ENCODE measurements at regions of chr7 and their contacts with region 1.

Region 1: DNA sequence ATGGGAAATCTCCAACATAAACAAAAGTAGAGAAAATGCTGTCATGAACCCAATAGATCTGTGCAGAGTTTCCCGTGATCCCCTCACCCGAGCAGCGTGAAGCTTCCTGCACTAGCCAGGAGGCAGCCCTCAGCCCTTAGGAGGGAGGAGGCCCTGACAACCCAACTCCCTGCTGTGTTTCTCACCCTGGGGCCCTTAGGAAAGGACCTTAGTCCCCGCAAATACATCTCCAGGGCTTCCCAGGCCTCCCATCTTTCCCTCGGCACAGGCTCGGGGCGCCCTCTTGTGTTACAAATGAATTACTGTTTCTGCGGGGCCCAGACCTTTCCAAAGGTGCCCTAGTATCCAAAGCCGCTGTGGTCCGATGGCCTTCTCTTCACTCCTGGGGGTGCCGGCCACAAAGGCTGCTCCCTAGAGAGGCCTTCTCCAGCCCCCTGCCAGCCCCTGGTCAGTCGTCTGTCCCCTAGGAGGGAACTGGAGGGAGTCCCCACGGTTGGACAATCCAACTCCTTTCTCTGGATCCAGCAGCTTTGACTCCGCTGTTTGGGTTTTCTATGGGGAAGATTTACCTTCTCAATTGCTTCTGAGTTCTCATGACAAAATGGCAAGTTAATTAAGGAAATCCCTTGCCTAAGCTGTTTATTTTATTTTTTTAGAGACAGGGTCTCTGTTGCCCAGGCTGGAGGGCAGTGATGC is 49.9 kb upstream of the SH2B2 start:
- DNase-seq: peak; percentile 42 to 63 (median 60)
- H3K4me3 ChIP-seq: no peak overlapping the region
- H3K27ac ChIP-seq: no peak overlapping the region
- H3K4me1 ChIP-seq: no peaks in the 10 kb centered on the region
- H3K27me3 ChIP-seq: no peaks in the 10 kb centered on the region

Region 2: DNA sequence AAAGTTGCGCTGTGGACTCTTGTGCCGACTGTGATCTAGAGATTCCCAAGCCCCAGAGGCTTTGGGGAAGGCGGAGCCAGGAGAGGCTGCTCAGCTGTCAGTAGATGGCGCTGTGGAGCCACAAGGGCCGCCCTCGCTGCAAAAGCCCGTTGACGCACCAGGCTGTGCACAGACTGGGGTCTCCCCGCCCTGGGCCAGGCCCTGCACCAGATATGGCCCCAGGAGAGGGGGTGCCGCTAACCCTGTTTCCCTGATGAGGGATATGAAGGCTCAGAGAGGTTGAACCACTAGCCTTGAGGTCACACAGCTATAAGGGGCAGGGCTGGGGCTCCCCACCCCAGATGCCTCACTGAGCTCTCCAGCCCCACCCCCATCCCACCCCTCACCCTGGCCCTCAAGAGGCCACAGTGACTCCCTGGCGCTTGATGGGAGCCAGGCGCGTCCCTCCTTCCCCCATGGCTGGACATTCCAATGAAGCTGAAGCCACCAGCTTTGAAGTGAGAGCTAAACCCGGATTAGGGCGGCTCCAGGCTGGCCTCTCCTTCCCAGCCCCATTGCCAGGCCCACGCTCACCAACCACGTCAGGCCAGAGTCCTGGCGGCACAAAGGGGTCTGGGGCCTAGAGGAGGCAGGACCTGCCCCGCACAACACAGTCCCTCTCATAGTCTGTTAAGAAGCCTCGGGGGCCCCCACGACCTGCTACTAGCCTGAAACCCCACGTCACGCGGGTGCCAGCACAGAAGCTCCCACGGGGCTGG is 634.1 kb before region 1 on chr7:
- CTCF ChIA-PET with region 1: interaction called, 13 read pairs
- POLR2A ChIA-PET with region 1: no interaction called
- DNase-seq: peak; percentile 79 to 88 (median 79)
- H3K4me3 ChIP-seq: no peak overlapping the region
- H3K27ac ChIP-seq: no peak overlapping the region
- H3K4me1 ChIP-seq: no peaks in the 10 kb centered on the region
- H3K27me3 ChIP-seq: no peaks in the 10 kb centered on the region

Region 3: DNA sequence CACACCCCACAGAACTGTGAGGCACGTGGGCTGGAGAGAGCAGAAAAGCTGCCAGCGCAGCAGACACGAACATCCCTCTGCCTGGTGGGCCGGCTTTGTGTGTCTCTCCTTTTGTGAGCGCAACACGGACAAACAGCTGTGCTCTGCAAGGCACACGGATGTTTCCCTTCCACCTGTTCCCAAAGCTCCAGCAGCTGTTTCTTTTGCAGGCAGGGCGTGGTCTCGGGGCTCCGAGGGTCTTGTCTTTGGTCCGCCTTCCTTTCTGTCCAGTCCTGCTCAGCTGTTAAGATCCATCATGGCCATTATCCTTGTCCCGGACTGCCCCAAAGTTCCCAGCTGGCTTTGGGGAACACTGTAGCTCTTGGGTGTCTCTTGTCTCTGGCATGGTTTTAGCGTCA is 17.2 kb after region 1 on chr7:
- CTCF ChIA-PET with region 1: interaction called, 13 read pairs
- POLR2A ChIA-PET with region 1: no interaction called
- DNase-seq: no peak
- H3K4me3 ChIP-seq: no peak overlapping the region
- H3K27ac ChIP-seq: no peak overlapping the region
- H3K4me1 ChIP-seq: no peaks in the 10 kb centered on the region
- H3K27me3 ChIP-seq: no peaks in the 10 kb centered on the region

Measured in common myeloid progenitor, CD34-positive (primary cell).